Dorsolateral prefrontal cortex (tissue), 120 donors: ENCODE measurements at regions of chr10 and their contacts with region 1.

Region 1: GRCh38 chr10:59906417-59907202 is at the start of gene CCDC6:
- DNase-seq: peak; percentile 82 to 94 (median 90)
- H3K4me3 ChIP-seq: peak within 1 kb of the TSS; percentile 58 to 99 (median 93)
- H3K27ac ChIP-seq: peak within 1 kb of the TSS; percentile 66 to 99 (median 94)
- H3K27me3 ChIP-seq: no peaks in the 10 kb centered on the region
- CTCF ChIP-seq: peak; percentile 62 to 95 (median 82)
- total RNA-seq, gene CCDC6: 30.9 to 97.2 (median 68.8) TPM

Region 2: DNA sequence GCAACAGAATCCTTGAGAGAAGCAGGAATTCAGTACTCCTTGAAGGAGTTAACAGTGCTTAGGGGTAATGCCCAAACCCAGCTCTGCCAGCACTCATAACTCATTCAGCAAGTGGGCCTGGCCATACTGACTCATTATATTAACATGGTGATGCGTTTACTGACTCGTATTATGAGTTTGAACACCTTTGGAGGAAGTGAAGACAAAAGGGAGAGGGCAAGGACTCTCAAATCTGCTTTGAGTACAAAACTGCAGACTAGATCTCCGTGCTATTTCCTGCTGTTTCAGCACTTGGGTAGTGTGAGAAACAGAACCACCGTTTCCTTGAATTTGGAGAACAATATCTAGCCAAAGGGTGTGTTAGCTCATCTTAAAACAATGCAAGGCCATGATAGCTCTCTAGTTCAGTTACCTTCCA is 227.7 kb before region 1 on chr10:
- intact Hi-C with region 1: no loop called
- DNase-seq: no peak
- H3K4me3 ChIP-seq: no peak overlapping the region
- H3K27ac ChIP-seq: no peak overlapping the region
- H3K27me3 ChIP-seq: no peaks in the 10 kb centered on the region
- CTCF ChIP-seq: no peak

Region 3: GRCh38 chr10:59709395-59710125 is 197.1 kb before region 1 on chr10 and contains the start of gene SLC16A9:
- intact Hi-C with region 1: loop called in 1 of 2 experiments (anchors 5 kb)
- DNase-seq: peak in 7 of 10 donors; percentile 22 to 77 (median 60)
- H3K4me3 ChIP-seq: peak within 1 kb of the TSS; percentile 55 to 83 (median 72)
- H3K27ac ChIP-seq: peak within 1 kb of the TSS in 40 of 59 donors; percentile 5 to 81 (median 58)
- H3K27me3 ChIP-seq: peaks cover 0 to 13% (median 0%) of the 10 kb centered on the region in 45 donors
- CTCF ChIP-seq: peak in 31 of 56 donors; percentile 6 to 38 (median 25)
- total RNA-seq, gene SLC16A9: 2.4 to 32.3 (median 10.7) TPM

Region 4: GRCh38 chr10:59830601-59831259 is 75.9 kb before region 1 on chr10:
- intact Hi-C with region 1: loop called in 1 of 2 experiments (anchors 5 kb)
- DNase-seq: peak in 3 of 10 donors; percentile 35 to 55 (median 53)
- H3K4me3 ChIP-seq: no peak overlapping the region
- H3K27ac ChIP-seq: no peak overlapping the region
- H3K27me3 ChIP-seq: no peaks in the 10 kb centered on the region
- CTCF ChIP-seq: peak; percentile 40 to 86 (median 75)

Region 5: GRCh38 chr10:59865101-59865500 is 41.5 kb before region 1 on chr10:
- intact Hi-C with region 1: loop called in 1 of 2 experiments (anchors 2 kb)
- DNase-seq: no peak
- H3K4me3 ChIP-seq: no peak overlapping the region
- H3K27ac ChIP-seq: peak overlapping the region in 3 of 59 donors; percentile 6 to 29 (median 21)
- H3K27me3 ChIP-seq: no peaks in the 10 kb centered on the region
- CTCF ChIP-seq: peak in 44 of 56 donors; percentile 12 to 59 (median 40)

Region 6: GRCh38 chr10:60032723-60033122 is 126.1 kb after region 1 on chr10:
- intact Hi-C with region 1: loop called (anchors 5 to 10 kb)
- DNase-seq: peak in 1 of 10 donors; percentile 39
- H3K4me3 ChIP-seq: no peak overlapping the region
- H3K27ac ChIP-seq: peak overlapping the region in 28 of 59 donors; percentile 1 to 73 (median 40)
- H3K27me3 ChIP-seq: no peaks in the 10 kb centered on the region
- CTCF ChIP-seq: peak in 50 of 56 donors; percentile 15 to 64 (median 40)